PC-3 (cell line): ENCODE measurements at regions of chr3 and their contacts with region 1.

Region 1: DNA sequence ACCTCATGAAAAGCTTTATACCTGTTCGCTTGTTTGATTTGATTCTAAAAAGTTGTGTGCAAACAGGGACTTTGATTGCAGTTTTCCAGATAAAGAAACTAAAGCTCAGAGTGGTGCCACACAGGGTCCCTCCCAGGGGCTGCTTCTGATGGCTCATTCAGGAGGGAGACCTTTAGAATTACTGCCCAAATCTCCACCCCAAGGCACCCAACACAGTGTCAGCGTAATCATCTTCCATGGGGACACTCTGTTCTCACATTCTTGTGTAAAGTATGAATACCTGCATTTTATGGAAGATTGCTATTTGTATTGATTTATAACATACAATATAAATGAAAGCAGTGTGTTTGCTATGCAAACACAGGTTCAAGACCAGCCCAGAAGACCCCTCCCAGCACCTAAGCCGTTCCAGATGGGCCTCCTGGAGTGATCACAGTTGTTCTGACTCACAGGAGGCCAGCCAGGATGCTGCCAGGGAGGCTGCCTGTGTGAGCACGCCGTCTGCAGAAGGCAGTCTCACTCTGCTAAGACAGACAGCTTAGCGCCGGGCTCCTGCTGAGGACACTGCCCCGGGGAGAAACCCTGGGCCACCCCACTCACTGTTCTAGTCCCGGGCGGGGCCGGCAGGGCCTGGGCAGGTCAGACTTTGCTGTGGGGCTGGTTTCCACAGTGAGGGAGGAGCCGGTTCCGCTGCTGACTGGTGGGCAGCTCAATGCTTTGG is 185.6 kb downstream of the FAM43A start:
- DNase-seq: peak; percentile 89
- ATAC-seq: peak; percentile 69
- H3K4me3 ChIP-seq: peak overlapping the region; percentile 41; the same call in 1 of the 2 replicates
- H3K27ac ChIP-seq: peak overlapping the region; percentile 96
- H3K4me1 ChIP-seq: peaks cover 51% of the 10 kb centered on the region
- H3K27me3 ChIP-seq: no peaks in the 10 kb centered on the region
- CTCF ChIP-seq: no peak; the same call in 1 of the 2 replicates

Region 2: DNA sequence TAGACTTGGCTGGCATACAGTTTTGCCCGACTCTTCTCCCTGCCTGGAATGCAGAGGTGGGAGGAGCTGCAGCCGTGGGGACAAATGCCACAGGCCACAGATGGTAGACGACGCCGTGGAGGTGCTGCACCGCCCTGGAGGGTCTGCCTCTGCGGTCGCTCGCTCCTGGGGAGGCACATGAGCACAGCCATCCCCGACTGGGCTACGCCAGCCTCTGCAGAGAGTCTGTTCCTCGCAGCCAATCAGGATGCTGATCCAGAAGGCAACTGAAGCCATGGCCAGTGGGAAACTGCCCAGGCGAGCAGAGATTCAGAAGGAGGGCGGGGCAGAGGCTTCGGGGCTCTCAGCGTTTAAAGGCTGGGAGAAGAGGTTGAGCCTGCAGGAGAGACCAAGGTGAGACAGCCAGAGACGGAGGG is 489.8 kb before region 1 on chr3:
- CTCF ChIA-PET with region 1: no interaction called
- POLR2A ChIA-PET with region 1: no interaction called
- intact Hi-C with region 1: no loop called
- DNase-seq: peak; percentile 14
- ATAC-seq: peak; percentile 56
- H3K4me3 ChIP-seq: no peak overlapping the region
- H3K27ac ChIP-seq: no peak overlapping the region
- H3K4me1 ChIP-seq: no peaks in the 10 kb centered on the region
- H3K27me3 ChIP-seq: no peaks in the 10 kb centered on the region
- CTCF ChIP-seq: no peak

Region 3: DNA sequence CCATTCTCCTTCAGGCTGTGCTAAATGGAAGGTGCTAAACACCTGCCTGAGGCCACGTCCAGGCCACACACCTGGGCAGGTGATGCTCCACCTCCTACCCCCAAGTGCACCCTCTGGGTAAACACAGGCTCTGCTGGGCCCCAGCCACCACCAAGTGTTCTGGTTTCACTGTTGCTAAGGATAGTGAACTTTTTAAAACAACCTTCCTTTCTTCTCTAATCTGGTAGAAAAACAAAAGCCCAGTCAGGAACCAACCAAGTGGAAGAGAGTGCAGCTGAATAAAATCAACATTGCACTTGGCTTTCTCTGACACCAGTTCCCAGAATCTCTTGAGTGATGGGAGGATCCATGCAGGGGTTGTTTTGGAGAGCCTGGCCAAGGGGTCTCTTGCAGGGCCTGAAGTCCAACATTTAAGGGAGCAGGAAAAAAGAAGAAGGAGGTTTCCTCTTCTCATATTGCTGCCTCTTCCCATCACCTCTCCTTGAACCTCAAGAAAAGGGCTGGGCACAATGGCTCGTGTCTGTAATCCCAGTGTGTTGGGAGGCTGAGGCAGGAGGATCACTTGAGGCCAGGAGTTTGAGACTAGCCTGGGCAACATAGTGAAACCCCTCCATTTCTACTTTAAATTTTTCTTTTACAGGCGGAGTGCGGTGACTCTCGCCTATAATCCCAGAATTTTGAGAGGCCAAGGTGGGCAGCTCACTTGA is 358.3 kb before region 1 on chr3:
- CTCF ChIA-PET with region 1: no interaction called
- POLR2A ChIA-PET with region 1: no interaction called
- intact Hi-C with region 1: no loop called
- DNase-seq: peak; percentile 16
- ATAC-seq: peak; percentile 39
- H3K4me3 ChIP-seq: no peak overlapping the region
- H3K27ac ChIP-seq: no peak overlapping the region
- H3K4me1 ChIP-seq: no peaks in the 10 kb centered on the region
- H3K27me3 ChIP-seq: no peaks in the 10 kb centered on the region
- CTCF ChIP-seq: no peak

Region 4: DNA sequence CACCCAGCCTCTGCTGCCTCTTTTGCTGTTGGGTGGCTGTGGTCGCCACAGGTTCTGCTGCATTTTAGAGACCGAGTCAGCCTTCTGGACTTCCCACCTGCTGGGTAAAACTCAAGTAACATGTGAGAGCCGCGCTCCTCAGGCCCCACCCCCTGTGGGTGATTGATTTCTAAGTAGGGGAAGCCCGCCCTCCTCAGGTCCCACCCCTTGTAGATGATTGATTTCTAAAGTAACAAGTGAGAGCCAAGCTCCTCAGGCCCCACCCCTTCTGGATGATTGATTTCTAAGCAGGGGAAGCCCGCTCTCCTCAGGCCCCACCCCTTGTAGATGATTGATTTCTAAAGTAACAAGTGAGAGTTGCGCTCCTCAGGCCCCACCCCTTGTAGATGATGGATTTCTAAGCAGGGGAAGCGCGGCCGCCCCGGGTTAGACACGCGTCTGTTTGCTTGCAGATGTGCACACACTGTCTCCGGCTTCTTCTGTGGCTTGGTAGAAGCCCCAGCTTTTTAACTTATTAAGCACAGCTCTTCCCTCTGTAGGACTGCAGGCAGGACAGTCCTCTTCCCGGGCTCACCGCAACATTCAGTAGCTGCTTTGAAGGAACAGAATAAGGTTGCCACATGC is 102.2 kb before region 1 on chr3:
- CTCF ChIA-PET with region 1: interaction called, 3 read pairs
- POLR2A ChIA-PET with region 1: no interaction called
- intact Hi-C with region 1: loop called (anchors 1 kb)
- DNase-seq: peak; percentile 97
- ATAC-seq: peak; percentile 87
- H3K4me3 ChIP-seq: peak overlapping the region; percentile 65
- H3K27ac ChIP-seq: no peak overlapping the region
- H3K4me1 ChIP-seq: peaks cover 37% of the 10 kb centered on the region
- H3K27me3 ChIP-seq: no peaks in the 10 kb centered on the region
- CTCF ChIP-seq: no peak

Region 5: DNA sequence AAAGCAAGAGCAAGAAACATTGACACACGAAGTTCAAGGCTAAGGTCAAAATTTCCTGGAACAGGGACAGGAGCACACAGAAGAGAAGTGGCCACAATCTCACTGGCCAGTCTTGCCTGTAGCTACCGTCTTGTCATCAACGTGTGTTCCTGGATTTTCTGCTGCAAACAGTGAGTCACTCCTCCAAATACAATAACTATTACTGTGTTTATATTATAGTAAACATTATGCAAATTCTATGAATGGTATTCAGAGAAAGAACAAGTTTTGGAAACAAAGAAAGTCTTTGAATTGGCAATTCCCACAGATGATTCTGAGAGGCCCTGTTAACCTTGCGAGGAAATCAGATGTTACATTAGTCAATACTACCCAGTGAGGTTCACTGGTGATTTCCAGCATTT is 34.9 kb after region 1 on chr3:
- CTCF ChIA-PET with region 1: no interaction called
- POLR2A ChIA-PET with region 1: interaction called, 4 read pairs
- intact Hi-C with region 1: loop called (anchors 1 kb)
- DNase-seq: peak; percentile 82
- ATAC-seq: peak; percentile 98
- H3K4me3 ChIP-seq: no peak overlapping the region
- H3K27ac ChIP-seq: peak overlapping the region; percentile 75
- H3K4me1 ChIP-seq: peaks cover 22% of the 10 kb centered on the region
- H3K27me3 ChIP-seq: no peaks in the 10 kb centered on the region
- CTCF ChIP-seq: no peak

Region 6: DNA sequence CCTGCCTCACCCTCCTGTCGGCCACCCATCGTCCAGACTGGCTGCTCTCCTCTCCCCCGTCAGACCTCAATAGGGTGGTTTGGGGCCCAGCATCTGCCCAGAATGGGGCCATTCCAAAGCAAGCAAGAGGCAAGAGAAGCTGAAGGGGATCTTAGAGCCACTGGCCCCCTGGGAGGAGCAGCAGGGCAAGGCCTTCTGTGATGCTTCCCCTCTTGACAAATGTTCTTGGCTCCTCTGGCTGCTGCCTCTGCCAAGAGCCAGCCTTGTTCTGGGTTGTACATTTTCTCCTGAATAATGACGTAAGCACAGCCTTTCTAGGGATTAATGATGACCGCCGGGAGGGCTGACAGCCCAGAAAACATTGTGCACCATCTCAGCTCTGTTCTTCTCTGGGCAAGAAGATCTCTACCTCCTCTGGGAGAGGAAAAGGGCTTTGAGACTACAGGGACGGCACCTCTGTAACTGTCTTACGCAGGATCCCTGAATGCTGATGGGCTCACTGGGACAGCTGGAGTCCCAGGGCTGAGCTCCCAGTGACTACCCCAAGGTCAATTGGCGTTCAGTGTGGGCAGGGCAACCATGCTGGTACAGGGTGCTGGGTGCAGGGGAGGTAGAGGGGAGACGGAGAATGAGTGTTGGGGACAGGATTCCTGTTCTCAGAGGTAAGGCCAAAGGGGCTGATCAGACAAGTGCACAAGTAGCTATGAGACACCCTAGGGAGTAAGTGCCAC is 67.7 kb after region 1 on chr3:
- CTCF ChIA-PET with region 1: no interaction called
- POLR2A ChIA-PET with region 1: no interaction called
- intact Hi-C with region 1: no loop called
- DNase-seq: no peak
- ATAC-seq: no peak
- H3K4me3 ChIP-seq: no peak overlapping the region
- H3K27ac ChIP-seq: no peak overlapping the region
- H3K4me1 ChIP-seq: peaks cover 10% of the 10 kb centered on the region
- H3K27me3 ChIP-seq: no peaks in the 10 kb centered on the region
- CTCF ChIP-seq: no peak

Region 7: GRCh38 chr3:195030791-195031321 is 159.6 kb after region 1 on chr3:
- CTCF ChIA-PET with region 1: interaction called, 4 read pairs
- POLR2A ChIA-PET with region 1: no interaction called
- intact Hi-C with region 1: loop called (anchors 5 kb)
- DNase-seq: peak; percentile 94
- ATAC-seq: peak; percentile 84
- H3K4me3 ChIP-seq: peak overlapping the region; percentile 25
- H3K27ac ChIP-seq: peak overlapping the region; percentile 89
- H3K4me1 ChIP-seq: peaks cover 44% of the 10 kb centered on the region
- H3K27me3 ChIP-seq: no peaks in the 10 kb centered on the region
- CTCF ChIP-seq: no peak

Region 8: DNA sequence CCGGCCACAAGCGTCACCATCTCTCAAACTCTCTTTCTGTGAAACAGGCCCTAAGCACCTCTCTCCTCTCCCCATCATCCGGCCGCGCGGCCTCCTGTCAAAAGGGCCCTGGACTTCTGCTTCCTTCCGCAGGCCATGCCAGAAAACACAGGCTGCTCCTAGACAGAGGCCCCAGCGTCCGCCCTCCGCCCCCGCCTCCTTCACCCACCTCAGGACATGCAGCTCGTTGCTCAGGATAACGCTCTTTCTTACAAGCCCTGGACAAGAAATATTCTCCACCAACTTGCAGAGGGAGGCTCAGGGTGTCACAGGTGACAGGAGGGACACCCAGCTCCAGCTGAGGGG is 187.7 kb after region 1 on chr3:
- CTCF ChIA-PET with region 1: no interaction called
- POLR2A ChIA-PET with region 1: no interaction called
- intact Hi-C with region 1: no loop called
- DNase-seq: no peak
- ATAC-seq: no peak
- H3K4me3 ChIP-seq: no peak overlapping the region
- H3K27ac ChIP-seq: no peak overlapping the region
- H3K4me1 ChIP-seq: peaks cover 7% of the 10 kb centered on the region
- H3K27me3 ChIP-seq: no peaks in the 10 kb centered on the region
- CTCF ChIP-seq: no peak